Cardiac septum (tissue), 1 donor: ENCODE measurements at regions of chr12 and their contacts with region 1.

Region 1: DNA sequence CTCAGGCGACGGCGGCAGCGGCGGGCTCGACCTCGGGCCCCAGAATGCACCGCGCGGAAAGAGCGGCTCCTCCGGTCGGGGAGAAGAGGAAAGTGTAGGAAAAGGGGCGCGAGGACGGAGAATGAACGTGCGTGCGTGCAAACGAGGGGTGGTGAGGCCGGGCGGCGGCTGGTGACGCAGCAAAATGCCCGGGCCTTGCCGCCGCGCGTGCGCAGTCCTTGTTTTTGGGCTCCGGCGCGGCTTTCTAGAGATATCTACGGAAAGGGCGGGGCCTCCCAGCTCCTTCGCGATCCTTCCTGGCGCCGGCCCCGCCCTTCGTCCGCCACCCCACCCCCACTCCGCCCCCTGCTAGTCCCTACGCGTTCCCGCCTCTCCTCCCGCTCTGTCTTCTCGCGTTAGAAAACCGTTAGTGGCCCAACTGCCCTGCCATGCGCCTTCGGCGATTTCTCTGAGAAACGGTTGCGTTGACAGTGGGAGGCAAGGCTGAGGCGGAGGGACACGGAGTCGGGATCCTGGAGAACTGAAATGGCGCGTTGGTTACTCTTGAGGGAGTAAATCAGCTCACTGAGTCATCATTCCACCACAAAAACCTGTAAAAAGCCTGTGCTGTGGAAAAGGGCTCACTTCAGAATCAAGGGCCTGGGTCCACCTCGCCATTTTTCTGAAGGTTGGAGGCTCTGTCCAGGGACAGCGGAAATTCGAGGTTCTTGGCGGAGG is at the start of gene PTGES3:
- DNase-seq: peak; percentile 97
- total RNA-seq, gene PTGES3: 121 TPM

Region 2: DNA sequence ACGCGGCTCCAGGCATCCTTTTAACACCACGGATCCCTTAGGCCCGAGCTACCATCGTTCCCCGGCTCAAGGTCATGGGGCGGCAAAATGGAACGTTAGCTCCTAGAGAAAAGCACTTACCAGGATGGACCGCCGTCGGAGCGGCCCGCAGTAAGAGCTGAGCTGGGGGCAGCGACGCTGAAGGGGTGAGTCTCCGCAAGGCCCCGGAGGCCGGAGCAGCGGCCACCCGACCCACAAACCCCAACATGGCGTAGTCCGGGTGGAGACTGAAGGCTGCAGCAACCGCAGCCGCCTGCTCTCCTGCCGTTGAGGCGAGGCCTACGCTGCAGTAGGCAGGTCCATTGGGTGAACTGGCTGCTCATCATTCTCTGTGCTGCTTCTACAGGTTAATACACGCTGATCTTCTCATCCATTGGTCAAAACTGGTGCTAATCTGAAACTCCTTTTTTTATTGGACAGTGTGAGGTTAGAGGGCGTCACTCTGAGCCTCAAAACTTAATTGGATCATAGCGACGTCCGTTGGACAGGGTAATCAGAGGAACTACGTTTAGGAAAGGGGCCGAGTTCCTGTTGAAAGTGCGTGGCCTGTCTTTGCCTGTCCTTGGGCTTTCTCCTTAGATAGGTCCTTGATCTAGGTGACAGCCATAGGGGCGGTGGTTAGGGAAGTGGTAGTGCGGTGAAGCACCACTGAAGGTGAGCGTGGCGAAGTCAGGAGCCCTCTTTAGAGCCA is 42.4 kb before region 1 on chr12 and contains the start of gene ATP5F1B:
- intact Hi-C with region 1: loop called (anchors 2 kb)
- DNase-seq: peak; percentile 99
- total RNA-seq, gene ATP5F1B: 2,154 TPM

Region 3: DNA sequence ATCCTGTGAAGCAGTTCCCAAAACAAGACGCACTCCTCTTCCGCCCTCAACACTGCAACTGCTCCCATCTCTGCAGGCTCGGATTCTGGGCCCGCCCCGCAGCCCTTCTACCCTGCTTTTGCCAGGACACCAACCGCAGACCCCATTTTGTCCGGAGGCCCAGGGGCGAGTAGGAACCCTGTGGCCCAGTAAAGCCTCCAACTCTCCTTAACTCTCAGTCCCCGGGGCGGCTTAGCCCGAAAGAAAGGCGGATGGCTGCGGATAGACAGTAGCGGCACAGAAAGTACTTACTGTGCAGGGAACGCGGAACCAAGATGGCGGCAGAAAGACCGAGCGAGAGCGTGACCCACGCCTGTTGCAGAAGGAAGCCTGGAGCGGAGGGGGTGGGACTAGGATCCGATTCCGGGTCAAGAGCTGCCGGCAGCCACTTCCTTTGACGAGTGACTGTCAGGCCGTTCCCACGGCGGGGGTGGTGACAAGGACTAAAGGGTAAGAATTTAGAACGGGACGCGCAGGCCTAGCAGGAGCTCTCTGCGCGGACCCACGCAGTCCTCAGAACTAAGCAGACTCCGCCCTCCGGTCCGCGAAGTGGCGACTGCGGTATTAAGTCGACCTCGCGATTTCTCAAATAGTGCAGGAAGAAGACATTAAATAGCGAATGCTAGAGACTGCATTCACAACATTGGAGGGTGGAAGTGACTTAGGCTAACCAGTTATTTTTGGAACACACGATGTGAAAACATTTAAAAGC is 36.9 kb after region 1 on chr12 and contains the start of gene NACA:
- intact Hi-C with region 1: loop called (anchors 1 kb)
- DNase-seq: peak; percentile 100
- total RNA-seq, gene NACA: 441 TPM

Region 4: DNA sequence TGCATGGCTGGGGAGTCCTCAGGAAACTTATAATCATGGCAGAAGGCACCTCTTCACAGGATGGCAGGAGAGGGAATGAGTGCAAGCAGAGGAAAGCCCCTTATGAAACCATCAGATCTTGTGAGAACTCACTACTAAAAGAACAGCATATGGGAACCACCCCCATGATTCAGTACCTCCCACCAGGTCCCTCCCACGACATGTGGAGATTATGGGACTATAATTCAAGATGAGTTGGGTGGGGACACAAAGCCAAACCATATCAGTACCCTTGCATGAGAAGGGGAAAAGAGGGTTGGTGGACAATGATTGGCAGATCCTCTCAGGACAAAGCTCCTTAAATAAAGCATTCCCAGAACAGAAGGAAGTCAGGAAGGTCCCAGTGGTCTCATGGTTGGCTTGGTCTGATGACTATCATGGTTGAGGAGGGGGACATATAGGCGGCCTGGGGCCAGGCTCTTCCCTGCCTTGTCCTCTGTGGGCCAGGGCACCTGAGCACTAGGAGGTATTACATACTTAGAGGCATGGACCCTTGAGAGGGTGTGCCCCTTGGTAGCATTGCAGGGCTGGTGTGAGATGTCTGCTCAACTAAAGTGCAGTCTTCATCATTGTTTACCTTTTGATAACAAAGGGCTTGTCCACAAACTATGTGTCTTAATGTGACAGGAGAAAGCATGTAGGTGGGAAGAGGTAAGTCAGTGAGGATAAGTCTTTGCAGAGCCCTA is 97.0 kb after region 1 on chr12:
- intact Hi-C with region 1: no loop called
- DNase-seq: no peak